ENCODE measurements at regions of chr14 and their contacts with region 1.

Region 1: DNA sequence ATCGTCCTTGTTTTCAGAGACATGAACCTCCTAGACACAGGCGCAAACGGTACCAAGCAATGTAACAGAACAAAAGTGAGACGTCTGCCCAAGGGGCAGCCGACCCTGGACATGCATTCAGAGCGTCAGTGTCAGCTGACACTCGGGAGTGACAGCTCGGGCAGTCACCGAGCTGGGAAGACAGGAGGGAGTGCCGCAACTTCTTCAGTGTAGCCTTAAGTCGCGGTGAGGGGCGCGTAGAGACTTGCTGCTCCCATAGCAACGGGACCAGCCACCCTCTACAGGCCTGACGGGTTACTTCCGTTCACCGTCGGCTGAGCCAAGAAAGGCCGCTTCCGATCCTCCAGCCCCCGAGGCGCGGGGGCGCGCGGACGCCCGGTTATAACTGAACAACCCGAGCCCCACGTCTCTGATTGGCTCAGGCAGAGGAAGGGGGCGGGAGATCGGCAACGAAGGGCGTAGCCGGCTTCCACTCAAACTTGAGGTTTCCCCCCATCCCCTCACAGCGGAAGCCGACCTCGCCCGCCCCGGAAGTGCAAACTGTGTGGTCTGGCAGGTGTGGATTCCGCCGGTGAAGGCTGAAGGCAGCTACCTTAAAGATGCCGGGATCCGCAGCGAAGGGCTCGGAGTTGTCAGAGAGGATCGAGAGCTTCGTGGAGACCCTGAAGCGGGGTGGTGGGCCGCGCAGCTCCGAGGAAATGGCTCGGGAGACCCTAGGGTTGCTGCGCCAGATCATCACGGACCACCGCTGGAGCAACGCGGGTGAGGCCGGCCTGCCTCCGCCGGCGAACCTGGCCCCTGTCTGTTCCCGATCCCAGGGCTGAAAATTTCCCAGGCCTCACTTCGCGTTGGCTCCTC is at the start of gene EIF2B2:
- DNase-seq: peak; percentile 100
- H3K4me3 Mint-ChIP-seq: peak within 1 kb of the TSS; percentile 99
- H3K27ac Mint-ChIP-seq: peak within 1 kb of the TSS; percentile 94
- H3K4me1 Mint-ChIP-seq: peaks cover 35% of the 10 kb centered on the region
- H3K27me3 Mint-ChIP-seq: peaks cover 8% of the 10 kb centered on the region
- total RNA-seq, gene EIF2B2: 51.6 and 53.3 TPM in 2 replicates

Region 2: DNA sequence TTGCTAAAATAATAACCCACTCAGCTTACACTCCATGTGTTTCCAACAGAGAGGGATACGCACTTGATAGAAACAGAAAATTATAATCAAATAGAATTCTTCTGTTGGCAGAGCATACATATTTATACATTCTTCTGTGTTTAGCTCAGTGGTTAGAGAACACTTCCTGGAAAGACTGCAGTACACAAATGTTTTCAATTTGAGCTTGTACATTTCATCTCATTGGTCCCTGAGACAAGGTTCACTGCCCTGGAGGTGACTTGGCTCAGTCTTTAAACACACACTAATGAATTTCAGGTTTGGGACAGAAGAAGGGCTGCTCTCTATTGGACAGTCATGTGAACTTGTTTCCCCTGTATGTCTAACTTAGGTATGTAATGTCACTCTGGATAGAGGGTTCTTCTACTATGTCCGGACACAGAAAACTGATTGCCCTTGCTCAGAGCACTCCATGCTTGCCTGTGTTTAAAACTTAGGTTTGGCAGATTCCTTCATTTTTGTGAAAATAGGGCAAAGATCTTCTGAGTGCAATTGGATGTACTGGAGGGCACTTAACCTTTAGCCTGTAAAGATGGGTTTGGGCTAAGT is 149.6 kb before region 1 on chr14:
- intact Hi-C with region 1: no loop called
- DNase-seq: no peak
- H3K4me3 Mint-ChIP-seq: no peak overlapping the region
- H3K27ac Mint-ChIP-seq: no peak overlapping the region
- H3K4me1 Mint-ChIP-seq: peaks cover 10% of the 10 kb centered on the region
- H3K27me3 Mint-ChIP-seq: no peaks in the 10 kb centered on the region

Region 3: GRCh38 chr14:74922739-74923401 is 79.8 kb before region 1 on chr14 and contains the start of gene RPS6KL1:
- intact Hi-C with region 1: loop called (anchors 1 kb)
- DNase-seq: peak; percentile 92
- H3K4me3 Mint-ChIP-seq: peak within 1 kb of the TSS; percentile 75
- H3K27ac Mint-ChIP-seq: peak within 1 kb of the TSS; percentile 53
- H3K4me1 Mint-ChIP-seq: peaks cover 8% of the 10 kb centered on the region
- H3K27me3 Mint-ChIP-seq: peaks cover 22% of the 10 kb centered on the region
- total RNA-seq, gene RPS6KL1: 7.0 and 9.6 TPM in 2 replicates

Region 4: GRCh38 chr14:74945823-74946682 is 56.6 kb before region 1 on chr14:
- intact Hi-C with region 1: loop called (anchors 5 kb)
- DNase-seq: peak; percentile 94
- H3K4me3 Mint-ChIP-seq: no peak overlapping the region
- H3K27ac Mint-ChIP-seq: no peak overlapping the region
- H3K4me1 Mint-ChIP-seq: peaks cover 21% of the 10 kb centered on the region
- H3K27me3 Mint-ChIP-seq: peaks cover 2% of the 10 kb centered on the region

Region 5: DNA sequence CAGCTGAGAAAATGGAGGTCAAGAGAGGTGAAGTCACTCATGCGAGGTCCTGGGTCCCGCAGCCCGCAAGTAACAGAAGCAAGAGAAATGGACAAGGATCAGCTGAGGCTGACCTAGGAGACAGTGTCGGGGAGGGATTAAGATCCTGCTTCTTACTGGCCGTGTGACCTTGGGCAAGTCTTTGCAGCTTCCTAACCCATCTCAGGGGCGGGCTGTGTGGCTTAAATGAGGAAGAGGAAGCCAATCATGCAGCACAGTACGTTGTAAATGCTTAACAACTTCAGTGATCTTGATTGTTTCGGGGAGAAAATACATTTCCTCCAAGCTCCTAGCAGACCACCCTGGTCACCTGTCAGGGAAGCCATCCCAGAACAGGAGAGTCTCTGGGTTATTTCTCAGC is 40.1 kb before region 1 on chr14:
- intact Hi-C with region 1: no loop called
- DNase-seq: no peak
- H3K4me3 Mint-ChIP-seq: no peak overlapping the region
- H3K27ac Mint-ChIP-seq: no peak overlapping the region
- H3K4me1 Mint-ChIP-seq: peaks cover 5% of the 10 kb centered on the region
- H3K27me3 Mint-ChIP-seq: peaks cover 16% of the 10 kb centered on the region

Region 6: DNA sequence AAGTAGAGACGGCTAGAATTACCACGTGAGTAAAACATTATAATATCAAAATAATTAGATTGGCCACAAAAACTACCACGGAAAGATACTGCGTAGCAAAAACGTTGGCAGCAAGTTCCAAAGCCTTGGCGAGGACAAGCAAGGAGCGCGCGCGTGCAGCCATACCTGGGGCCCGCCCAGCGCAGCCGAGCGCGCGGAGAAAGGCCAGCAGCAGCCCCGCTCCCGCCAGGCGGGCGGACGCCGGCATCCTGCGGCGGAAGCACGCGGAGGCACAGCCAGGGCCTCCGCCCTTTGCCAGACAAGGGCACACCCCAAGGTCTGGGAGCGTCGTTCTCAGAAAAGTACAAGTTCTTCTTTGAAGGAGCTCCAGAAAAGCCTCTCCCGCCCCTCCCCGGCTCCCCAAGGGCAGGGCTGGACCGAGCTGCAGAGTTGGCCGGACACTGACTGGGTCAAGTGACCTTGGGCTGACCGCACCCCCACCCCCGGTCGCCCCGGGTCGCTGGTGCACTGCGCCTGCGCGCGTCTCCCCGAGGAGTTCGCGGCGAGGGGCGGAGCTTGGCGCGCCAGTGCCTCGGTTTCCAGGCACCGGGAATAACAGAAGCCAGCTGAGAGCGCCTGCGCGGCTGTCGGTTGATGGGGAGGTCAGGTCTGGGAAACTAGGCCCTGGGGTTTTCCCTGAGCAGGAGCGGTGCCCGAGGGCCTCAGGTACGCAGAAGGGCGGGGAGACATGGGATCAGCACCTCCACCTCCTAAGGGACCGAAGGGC is 66.6 kb after region 1 on chr14 and contains the start of gene ZC2HC1C:
- intact Hi-C with region 1: loop called (anchors 2 kb)
- DNase-seq: peak; percentile 91
- H3K4me3 Mint-ChIP-seq: peak within 1 kb of the TSS; percentile 14
- H3K27ac Mint-ChIP-seq: peak within 1 kb of the TSS; percentile 88
- H3K4me1 Mint-ChIP-seq: peaks cover 9% of the 10 kb centered on the region
- H3K27me3 Mint-ChIP-seq: no peaks in the 10 kb centered on the region
- total RNA-seq, gene ZC2HC1C: 0.82 and 1.6 TPM in 2 replicates

Measured in activated CD4-positive, alpha-beta T cell treated with anti-CD3 and anti-CD28 coated beads, Interleukin-2, amount 10 ng/mL, durations not matched to agents 24 days and 14 days (primary cell).